Activated naive CD4-positive, alpha-beta T cell treated with anti-CD3 and anti-CD28 coated beads, Interleukin-2, amount 10 ng/mL, durations not matched to agents 7 days and 5 days (primary cell): ENCODE measurements at regions of chr16 and their contacts with region 1.

Region 1: GRCh38 chr16:31430380-31431052 is 2.4 kb upstream of the COX6A2 start:
- DNase-seq: no peak
- H3K4me3 Mint-ChIP-seq: no peak overlapping the region
- H3K27ac Mint-ChIP-seq: no peak overlapping the region
- H3K4me1 Mint-ChIP-seq: peaks cover 17% of the 10 kb centered on the region
- H3K27me3 Mint-ChIP-seq: peaks cover 24% of the 10 kb centered on the region

Region 2: GRCh38 chr16:31441956-31442355 is 11.4 kb after region 1 on chr16:
- CTCF ChIA-PET with region 1: interaction called, 20 read pairs
- DNase-seq: no peak
- H3K4me3 Mint-ChIP-seq: peak overlapping the region; percentile 78
- H3K27ac Mint-ChIP-seq: no peak overlapping the region
- H3K4me1 Mint-ChIP-seq: peaks cover 12% of the 10 kb centered on the region
- H3K27me3 Mint-ChIP-seq: peaks cover 16% of the 10 kb centered on the region

Region 3: GRCh38 chr16:31568577-31569359 is 138.3 kb after region 1 on chr16:
- CTCF ChIA-PET with region 1: no interaction called
- DNase-seq: no peak
- H3K4me3 Mint-ChIP-seq: no peak overlapping the region
- H3K27ac Mint-ChIP-seq: no peak overlapping the region
- H3K4me1 Mint-ChIP-seq: peaks cover 3% of the 10 kb centered on the region
- H3K27me3 Mint-ChIP-seq: peaks cover 61% of the 10 kb centered on the region